ENCODE measurements at regions of chr1 and their contacts with region 1.

Region 1: GRCh38 chr1:245156081-245156735 is 1.4 kb downstream of the KIF26B start:
- DNase-seq: peak; percentile 89
- ATAC-seq: peak; percentile 85
- H3K4me3 ChIP-seq: peak overlapping the region; percentile 65
- H3K27ac ChIP-seq: no peak overlapping the region
- H3K4me1 ChIP-seq: peaks cover 30% of the 10 kb centered on the region
- H3K27me3 ChIP-seq: peaks cover 80% of the 10 kb centered on the region
- CTCF ChIP-seq: peak; percentile 70

Region 2: DNA sequence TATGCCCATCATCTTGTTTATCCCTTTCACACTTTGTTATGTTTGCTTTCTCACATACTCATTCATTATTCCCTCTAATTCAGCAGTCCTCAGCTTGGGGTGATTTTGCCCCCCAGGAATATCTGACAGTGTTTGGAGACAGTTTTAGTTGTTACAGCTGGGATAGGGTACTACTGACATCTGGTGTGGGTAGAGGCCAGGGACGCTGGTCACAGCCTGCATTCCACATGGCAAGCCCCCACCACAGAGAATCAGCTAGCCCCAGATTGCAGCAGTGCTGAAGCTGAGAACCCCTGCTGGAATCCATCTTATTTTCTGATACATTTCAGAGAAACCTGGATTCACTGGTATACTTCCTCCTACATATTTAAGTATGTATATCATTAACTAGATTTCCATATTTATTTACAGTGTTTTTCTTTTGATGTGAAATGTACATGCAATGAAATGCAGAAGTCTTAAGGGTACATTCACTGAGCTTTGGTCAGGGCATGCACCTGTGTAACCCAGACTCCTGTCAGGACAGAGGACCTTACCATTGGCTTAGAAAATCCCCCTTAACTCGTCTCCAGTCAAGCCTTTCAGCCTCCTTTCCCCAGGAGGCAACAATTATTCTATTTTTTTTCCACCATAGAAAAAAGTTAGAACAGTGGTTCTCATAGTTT is 66.9 kb after region 1 on chr1:
- CTCF ChIA-PET with region 1: interaction called, 12 read pairs
- POLR2A ChIA-PET with region 1: no interaction called
- intact Hi-C with region 1: no loop called
- DNase-seq: no peak
- ATAC-seq: no peak
- H3K4me3 ChIP-seq: no peak overlapping the region
- H3K27ac ChIP-seq: no peak overlapping the region
- H3K4me1 ChIP-seq: no peaks in the 10 kb centered on the region
- H3K27me3 ChIP-seq: peaks cover 95% of the 10 kb centered on the region
- CTCF ChIP-seq: no peak

Region 3: GRCh38 chr1:245272676-245273075 is 116.5 kb after region 1 on chr1:
- CTCF ChIA-PET with region 1: no interaction called
- POLR2A ChIA-PET with region 1: no interaction called
- intact Hi-C with region 1: no loop called
- DNase-seq: no peak
- ATAC-seq: no peak
- H3K4me3 ChIP-seq: no peak overlapping the region
- H3K27ac ChIP-seq: no peak overlapping the region
- H3K4me1 ChIP-seq: no peaks in the 10 kb centered on the region
- H3K27me3 ChIP-seq: peaks cover 49% of the 10 kb centered on the region
- CTCF ChIP-seq: no peak

Region 4: GRCh38 chr1:245516284-245516759 is 360.1 kb after region 1 on chr1:
- CTCF ChIA-PET with region 1: no interaction called
- POLR2A ChIA-PET with region 1: no interaction called
- intact Hi-C with region 1: loop called (anchors 5 kb)
- DNase-seq: peak; percentile 63
- ATAC-seq: peak; percentile 81
- H3K4me3 ChIP-seq: no peak overlapping the region
- H3K27ac ChIP-seq: no peak overlapping the region
- H3K4me1 ChIP-seq: no peaks in the 10 kb centered on the region
- H3K27me3 ChIP-seq: peaks cover 41% of the 10 kb centered on the region
- CTCF ChIP-seq: peak; percentile 76

Region 5: GRCh38 chr1:246002725-246003441 is 846.7 kb after region 1 on chr1:
- CTCF ChIA-PET with region 1: interaction called, 5 read pairs
- POLR2A ChIA-PET with region 1: no interaction called
- intact Hi-C with region 1: loop called (anchors 1 kb)
- DNase-seq: peak; percentile 94
- ATAC-seq: peak; percentile 58
- H3K4me3 ChIP-seq: no peak overlapping the region
- H3K27ac ChIP-seq: no peak overlapping the region
- H3K4me1 ChIP-seq: peaks cover 24% of the 10 kb centered on the region
- H3K27me3 ChIP-seq: no peaks in the 10 kb centered on the region
- CTCF ChIP-seq: peak; percentile 97

Region 6: DNA sequence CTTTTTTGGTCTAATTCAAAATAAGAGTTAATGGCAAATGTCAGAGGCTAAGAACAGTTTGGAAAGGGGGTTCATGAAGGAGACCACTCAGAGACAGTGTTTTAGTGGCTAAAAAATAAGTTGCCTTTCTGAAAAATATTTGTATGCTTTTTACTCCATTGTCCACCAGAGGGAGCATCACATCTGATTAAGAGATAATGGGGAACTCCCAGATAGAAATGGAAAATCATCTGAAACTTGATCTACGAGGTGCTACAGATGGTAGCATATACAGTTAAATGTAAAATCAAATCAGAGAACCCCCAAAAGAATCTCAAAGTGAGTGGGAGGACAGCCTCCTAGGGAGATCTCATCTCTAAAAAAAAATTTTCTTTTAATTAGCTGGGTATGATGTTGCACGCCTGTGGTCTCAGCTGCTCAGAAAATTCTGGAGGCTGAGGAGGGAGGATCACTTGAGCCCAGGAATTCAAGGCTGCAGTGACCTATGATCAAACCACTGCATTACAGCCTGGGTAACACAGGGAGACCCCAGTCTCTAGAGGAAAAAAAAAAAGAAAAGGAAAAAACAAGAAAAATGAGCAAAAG is 1341.2 kb after region 1 on chr1:
- CTCF ChIA-PET with region 1: interaction called, 3 read pairs
- POLR2A ChIA-PET with region 1: no interaction called
- intact Hi-C with region 1: loop called (anchors 1 kb)
- DNase-seq: peak; percentile 92
- ATAC-seq: peak; percentile 52
- H3K4me3 ChIP-seq: no peak overlapping the region
- H3K27ac ChIP-seq: no peak overlapping the region
- H3K4me1 ChIP-seq: peaks cover 12% of the 10 kb centered on the region
- H3K27me3 ChIP-seq: no peaks in the 10 kb centered on the region
- CTCF ChIP-seq: peak; percentile 95